ENCODE measurements at regions of chr6 and their contacts with region 1.

Region 1: GRCh38 chr6:88982720-88983119 is 19.3 kb upstream of the RNGTT start:
- DNase-seq: peak; percentile 55
- CTCF ChIP-seq: peak; percentile 76

Region 2: DNA sequence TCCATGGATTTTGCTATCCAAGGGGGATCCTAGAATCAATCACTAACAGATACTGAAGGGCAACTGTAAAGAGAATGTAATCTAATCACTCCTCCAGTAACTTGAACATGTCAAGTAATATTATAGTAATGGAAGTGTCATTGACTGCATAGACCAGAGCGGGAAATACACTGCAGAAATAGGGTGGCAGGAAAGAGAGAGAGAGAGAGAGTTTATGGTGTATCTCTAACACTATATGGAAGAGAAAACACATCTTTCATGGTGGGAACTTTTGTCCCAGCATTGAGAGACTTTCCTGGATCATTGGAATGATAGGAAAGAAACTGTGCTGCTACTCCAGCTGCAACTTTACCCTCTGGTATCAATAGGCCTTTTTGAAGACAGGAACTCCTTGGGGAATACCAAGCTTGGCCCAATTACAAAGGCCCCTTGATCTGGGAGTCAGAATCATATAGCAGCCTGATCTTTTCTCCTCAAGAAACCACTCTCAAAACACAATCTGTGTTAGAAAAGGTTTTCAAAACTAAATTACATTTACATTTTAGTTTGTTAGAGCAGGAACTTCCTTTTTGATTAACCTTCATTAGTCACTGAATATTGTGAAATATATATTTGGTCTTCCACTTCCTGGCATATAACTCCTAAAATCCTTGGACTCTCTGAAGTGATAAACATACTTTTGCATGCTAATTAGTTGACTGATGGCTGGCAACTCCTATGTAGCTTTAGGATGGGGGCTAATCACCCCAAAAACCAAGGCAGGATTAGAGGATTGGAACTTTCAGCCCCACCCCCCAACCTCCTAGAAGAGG is 10.2 kb after region 1 on chr6:
- CTCF ChIA-PET with region 1: interaction called, 11 read pairs
- POLR2A ChIA-PET with region 1: no interaction called
- DNase-seq: no peak
- CTCF ChIP-seq: no peak

Region 3: DNA sequence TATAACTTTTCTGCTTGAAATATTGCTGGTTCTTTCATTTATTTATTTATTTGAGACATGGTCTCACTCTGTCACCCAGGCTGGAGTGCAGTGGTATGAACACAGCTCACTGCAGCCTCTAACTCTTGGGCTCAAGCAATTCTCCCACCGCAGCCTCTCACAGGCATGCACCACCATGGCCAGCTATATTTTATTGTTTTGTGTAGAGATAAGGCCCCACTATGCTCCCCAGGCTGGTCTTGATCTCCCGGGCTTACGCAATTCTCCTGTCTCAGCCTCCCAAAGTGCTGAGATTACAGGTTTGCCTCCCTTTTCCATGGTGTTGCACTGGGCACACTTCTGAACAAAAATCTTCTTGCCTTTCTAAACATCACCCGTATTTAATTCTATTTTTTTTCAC is 19.8 kb after region 1 on chr6:
- CTCF ChIA-PET with region 1: interaction called, 15 read pairs
- POLR2A ChIA-PET with region 1: no interaction called
- DNase-seq: no peak
- CTCF ChIP-seq: no peak

Region 4: GRCh38 chr6:89073014-89073620 is 90.4 kb after region 1 on chr6:
- CTCF ChIA-PET with region 1: interaction called, 12 read pairs
- POLR2A ChIA-PET with region 1: no interaction called
- DNase-seq: no peak
- CTCF ChIP-seq: no peak

Region 5: DNA sequence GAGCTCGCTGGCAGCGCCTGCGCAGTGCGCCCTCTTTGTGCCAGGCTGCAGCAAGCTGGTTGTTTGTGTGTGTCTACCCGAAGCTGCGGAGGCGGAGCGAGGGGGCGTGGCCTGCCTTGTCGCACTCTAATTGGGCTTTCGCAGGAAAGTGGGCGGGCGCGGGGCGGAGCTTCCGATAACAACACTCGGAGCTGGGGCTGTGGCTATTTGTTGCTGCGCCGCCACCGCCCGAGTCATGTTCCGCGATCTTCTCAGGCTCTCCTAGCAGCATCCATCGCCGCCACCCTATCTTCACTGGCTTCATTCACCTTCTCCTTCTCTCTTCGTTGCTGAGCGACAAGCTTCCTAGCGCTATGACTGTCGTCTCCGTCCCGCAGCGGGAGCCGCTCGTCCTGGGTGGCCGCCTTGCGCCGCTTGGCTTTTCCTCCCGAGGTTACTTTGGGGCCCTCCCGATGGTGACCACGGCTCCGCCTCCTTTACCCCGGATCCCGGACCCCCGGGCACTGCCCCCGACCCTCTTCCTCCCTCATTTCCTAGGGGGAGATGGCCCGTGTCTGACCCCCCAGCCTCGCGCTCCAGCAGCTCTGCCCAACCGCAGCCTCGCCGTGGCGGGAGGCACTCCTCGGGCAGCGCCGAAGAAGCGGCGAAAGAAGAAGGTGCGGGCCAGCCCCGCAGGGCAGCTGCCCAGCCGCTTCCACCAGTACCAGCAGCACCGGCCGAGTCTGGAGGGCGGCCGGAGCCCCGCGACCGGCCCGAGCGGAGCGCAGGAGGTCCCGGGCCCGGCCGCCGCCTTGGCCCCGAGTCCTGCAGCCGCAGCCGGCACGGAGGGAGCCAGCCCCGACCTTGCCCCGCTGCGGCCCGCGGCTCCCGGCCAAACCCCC is 98.1 kb after region 1 on chr6 and contains the start of gene PNRC1:
- CTCF ChIA-PET with region 1: interaction called, 17 read pairs
- POLR2A ChIA-PET with region 1: interaction called, 7 read pairs
- DNase-seq: peak; percentile 96
- CTCF ChIP-seq: no peak

Region 6: GRCh38 chr6:89242574-89243330 is 260.0 kb after region 1 on chr6:
- CTCF ChIA-PET with region 1: interaction called, 16 read pairs
- POLR2A ChIA-PET with region 1: no interaction called
- DNase-seq: peak; percentile 30
- CTCF ChIP-seq: peak; percentile 49

Region 7: DNA sequence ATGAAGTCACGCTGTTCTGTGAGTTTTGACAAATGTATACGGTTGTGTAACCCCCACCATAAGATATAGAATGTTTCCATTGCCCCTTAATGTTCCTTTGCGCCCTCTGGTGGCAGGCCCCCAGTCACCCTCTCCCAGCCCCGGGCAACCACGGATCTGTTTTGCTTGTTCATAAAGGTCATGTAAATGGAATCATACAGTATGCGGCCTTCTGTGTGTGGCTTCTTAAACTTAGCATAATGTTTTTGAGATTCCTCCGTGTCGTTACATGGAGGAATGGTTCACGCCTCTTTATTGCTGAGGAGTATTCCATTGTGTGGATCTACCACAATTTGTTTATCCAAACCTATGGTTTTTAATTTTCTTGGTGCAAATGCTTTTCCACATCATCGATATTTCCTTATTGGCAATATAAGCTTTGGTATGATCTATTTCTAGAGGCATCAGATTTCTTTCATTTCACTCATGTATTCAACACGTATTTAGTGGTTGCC is 627.5 kb after region 1 on chr6:
- CTCF ChIA-PET with region 1: interaction called, 12 read pairs
- POLR2A ChIA-PET with region 1: no interaction called
- DNase-seq: peak; percentile 71
- CTCF ChIP-seq: peak; percentile 88

Region 8: GRCh38 chr6:89768324-89768723 is 785.6 kb after region 1 on chr6:
- CTCF ChIA-PET with region 1: no interaction called
- POLR2A ChIA-PET with region 1: no interaction called
- DNase-seq: no peak
- CTCF ChIP-seq: no peak